Activated naive CD4-positive, alpha-beta T cell treated with anti-CD3 and anti-CD28 coated beads for 36 hours (primary cell): ENCODE measurements at regions of chr20 and their contacts with region 1.

Region 1: GRCh38 chr20:35664544-35665221 is at the starts of genes CPNE1 and RBM12:
- DNase-seq: peak; percentile 95
- H3K4me3 Mint-ChIP-seq: peak within 1 kb of the TSS; percentile 95
- H3K27ac Mint-ChIP-seq: peak within 1 kb of the TSS; percentile 99
- H3K4me1 Mint-ChIP-seq: peaks cover 36% of the 10 kb centered on the region
- H3K27me3 Mint-ChIP-seq: no peaks in the 10 kb centered on the region
- total RNA-seq, gene CPNE1: 261 to 281 TPM
- total RNA-seq, gene RBM12: 106 to 110 TPM

Region 2: DNA sequence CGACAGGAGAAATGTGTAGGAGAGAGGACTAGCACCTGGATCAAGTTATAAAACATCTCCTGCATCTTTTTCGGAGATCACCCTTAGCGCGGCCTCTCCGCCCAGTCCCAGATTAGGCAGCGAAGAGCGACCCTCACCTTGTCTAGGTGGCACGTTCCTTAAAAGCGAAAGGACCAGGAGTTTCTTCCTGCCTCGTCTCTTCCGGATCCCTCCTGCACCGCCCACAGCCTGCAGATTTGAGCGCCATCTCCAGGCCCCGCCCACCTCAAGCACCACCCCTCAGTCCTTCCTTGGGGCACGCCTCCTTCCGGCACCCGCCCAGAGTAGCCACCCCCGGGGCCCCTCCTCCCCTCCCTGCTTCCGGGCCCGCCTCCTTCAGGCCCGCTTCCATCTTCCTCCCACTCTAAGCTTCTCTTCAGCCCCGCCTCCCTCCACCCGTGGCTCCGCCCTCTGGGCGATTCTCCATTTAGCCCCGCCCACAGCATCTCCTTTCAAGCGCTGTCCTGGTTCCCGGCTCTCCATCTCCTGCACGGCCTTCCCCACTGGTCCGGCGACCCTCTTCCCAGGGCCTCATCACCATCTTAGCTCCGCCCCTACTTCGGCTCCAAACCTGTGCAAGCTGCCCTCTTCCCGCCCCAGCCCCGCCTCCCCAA is 1671.6 kb before region 1 on chr20:
- CTCF ChIA-PET with region 1: no interaction called
- intact Hi-C with region 1: loop called (anchors 5 kb)
- DNase-seq: peak; percentile 100
- H3K4me3 Mint-ChIP-seq: peak overlapping the region; percentile 90
- H3K27ac Mint-ChIP-seq: peak overlapping the region; percentile 98
- H3K4me1 Mint-ChIP-seq: peaks cover 46% of the 10 kb centered on the region
- H3K27me3 Mint-ChIP-seq: no peaks in the 10 kb centered on the region

Region 3: DNA sequence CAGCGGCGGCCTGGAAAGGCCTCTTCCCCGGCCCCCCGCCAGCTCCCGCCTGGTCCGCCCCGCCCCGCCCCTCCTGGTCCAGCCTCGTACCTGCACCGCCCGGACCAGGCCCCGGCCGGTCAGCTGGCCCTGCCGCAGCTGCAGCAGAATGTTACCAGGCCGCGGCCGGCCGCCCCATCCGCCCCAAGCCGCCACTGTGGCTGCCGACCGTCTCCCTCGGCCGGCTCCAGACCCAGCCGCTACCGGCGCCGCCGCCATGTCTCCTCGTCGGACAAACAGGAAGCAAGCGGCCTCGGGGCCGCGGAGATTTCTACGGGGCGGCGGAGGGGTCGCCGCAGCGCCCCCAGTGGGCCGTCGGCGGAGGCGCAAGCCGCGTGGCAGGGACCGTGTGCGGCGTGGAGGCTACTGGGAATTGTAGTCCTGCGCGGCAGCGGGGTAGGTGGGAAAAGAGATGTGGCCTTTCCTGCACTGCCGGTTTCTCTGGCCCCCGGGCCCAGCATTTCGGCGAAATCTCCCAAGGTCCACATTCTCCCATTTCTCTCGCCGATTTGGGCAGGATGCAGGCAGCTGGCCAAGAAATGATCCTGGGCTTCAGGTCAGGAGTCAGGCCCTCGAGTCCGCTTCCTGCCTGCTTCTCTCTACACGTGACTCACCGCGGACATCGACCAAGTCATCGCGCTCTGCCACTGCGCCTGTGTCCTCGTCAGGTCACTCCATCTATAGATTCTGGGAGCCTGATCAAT is 572.0 kb before region 1 on chr20 and contains the start of gene TRPC4AP:
- CTCF ChIA-PET with region 1: no interaction called
- intact Hi-C with region 1: loop called (anchors 2 kb)
- DNase-seq: peak; percentile 90
- H3K4me3 Mint-ChIP-seq: peak within 1 kb of the TSS; percentile 89
- H3K27ac Mint-ChIP-seq: peak within 1 kb of the TSS; percentile 100
- H3K4me1 Mint-ChIP-seq: peaks cover 59% of the 10 kb centered on the region
- H3K27me3 Mint-ChIP-seq: no peaks in the 10 kb centered on the region
- total RNA-seq, gene TRPC4AP: 49.6 to 51.7 TPM

Region 4: GRCh38 chr20:35454881-35455609 is 209.6 kb before region 1 on chr20 and contains the start of gene CEP250:
- CTCF ChIA-PET with region 1: no interaction called
- intact Hi-C with region 1: loop called (anchors 2 kb)
- DNase-seq: peak; percentile 94
- H3K4me3 Mint-ChIP-seq: peak within 1 kb of the TSS; percentile 89
- H3K27ac Mint-ChIP-seq: peak within 1 kb of the TSS; percentile 99
- H3K4me1 Mint-ChIP-seq: peaks cover 27% of the 10 kb centered on the region
- H3K27me3 Mint-ChIP-seq: no peaks in the 10 kb centered on the region
- total RNA-seq, gene CEP250: 43.4 to 46.9 TPM

Region 5: GRCh38 chr20:35619196-35620095 is 45.2 kb before region 1 on chr20:
- CTCF ChIA-PET with region 1: interaction called, 14 read pairs
- intact Hi-C with region 1: loop called (anchors 1 kb)
- DNase-seq: peak; percentile 88
- H3K4me3 Mint-ChIP-seq: peak overlapping the region; percentile 82
- H3K27ac Mint-ChIP-seq: peak overlapping the region; percentile 70
- H3K4me1 Mint-ChIP-seq: peaks cover 47% of the 10 kb centered on the region
- H3K27me3 Mint-ChIP-seq: peaks cover 4% of the 10 kb centered on the region

Region 6: GRCh38 chr20:35648836-35649235 is 15.8 kb before region 1 on chr20:
- CTCF ChIA-PET with region 1: no interaction called
- intact Hi-C with region 1: no loop called
- DNase-seq: no peak
- H3K4me3 Mint-ChIP-seq: no peak overlapping the region
- H3K27ac Mint-ChIP-seq: peak overlapping the region; percentile 5
- H3K4me1 Mint-ChIP-seq: peaks cover 75% of the 10 kb centered on the region
- H3K27me3 Mint-ChIP-seq: no peaks in the 10 kb centered on the region

Region 7: GRCh38 chr20:35771689-35772562 is 107.2 kb after region 1 on chr20 and contains the start of gene PHF20:
- CTCF ChIA-PET with region 1: no interaction called
- intact Hi-C with region 1: loop called (anchors 2 kb)
- DNase-seq: peak; percentile 100
- H3K4me3 Mint-ChIP-seq: peak within 1 kb of the TSS; percentile 80
- H3K27ac Mint-ChIP-seq: peak within 1 kb of the TSS; percentile 82
- H3K4me1 Mint-ChIP-seq: peaks cover 74% of the 10 kb centered on the region
- H3K27me3 Mint-ChIP-seq: no peaks in the 10 kb centered on the region
- total RNA-seq, gene PHF20: 39.8 to 46.0 TPM

Region 8: DNA sequence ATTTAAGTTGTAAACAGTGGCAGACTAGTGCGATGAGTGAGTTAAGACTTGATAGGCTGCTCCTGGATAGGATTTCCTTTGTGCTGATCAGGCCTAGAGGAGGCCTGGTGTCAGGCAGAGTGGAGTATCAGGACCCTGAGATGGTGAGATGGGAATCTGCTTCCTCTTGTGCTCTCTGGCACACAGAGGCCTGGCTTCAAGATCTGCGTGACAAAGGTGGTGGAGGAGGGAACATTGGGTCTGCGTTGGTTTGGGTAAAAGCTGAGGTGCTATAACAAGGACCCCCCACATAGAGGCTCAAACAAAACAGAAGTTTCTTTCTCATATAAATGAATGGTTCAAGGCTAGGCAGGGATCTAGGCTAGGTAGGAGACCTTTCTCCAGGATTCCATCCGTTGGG is 269.4 kb after region 1 on chr20:
- CTCF ChIA-PET with region 1: no interaction called
- intact Hi-C with region 1: no loop called
- DNase-seq: no peak
- H3K4me3 Mint-ChIP-seq: no peak overlapping the region
- H3K27ac Mint-ChIP-seq: no peak overlapping the region
- H3K4me1 Mint-ChIP-seq: peaks cover 7% of the 10 kb centered on the region
- H3K27me3 Mint-ChIP-seq: no peaks in the 10 kb centered on the region

Region 9: GRCh38 chr20:35978041-35978513 is 313.4 kb after region 1 on chr20:
- CTCF ChIA-PET with region 1: no interaction called
- intact Hi-C with region 1: no loop called
- DNase-seq: no peak
- H3K4me3 Mint-ChIP-seq: no peak overlapping the region
- H3K27ac Mint-ChIP-seq: no peak overlapping the region
- H3K4me1 Mint-ChIP-seq: no peaks in the 10 kb centered on the region
- H3K27me3 Mint-ChIP-seq: no peaks in the 10 kb centered on the region

Region 10: DNA sequence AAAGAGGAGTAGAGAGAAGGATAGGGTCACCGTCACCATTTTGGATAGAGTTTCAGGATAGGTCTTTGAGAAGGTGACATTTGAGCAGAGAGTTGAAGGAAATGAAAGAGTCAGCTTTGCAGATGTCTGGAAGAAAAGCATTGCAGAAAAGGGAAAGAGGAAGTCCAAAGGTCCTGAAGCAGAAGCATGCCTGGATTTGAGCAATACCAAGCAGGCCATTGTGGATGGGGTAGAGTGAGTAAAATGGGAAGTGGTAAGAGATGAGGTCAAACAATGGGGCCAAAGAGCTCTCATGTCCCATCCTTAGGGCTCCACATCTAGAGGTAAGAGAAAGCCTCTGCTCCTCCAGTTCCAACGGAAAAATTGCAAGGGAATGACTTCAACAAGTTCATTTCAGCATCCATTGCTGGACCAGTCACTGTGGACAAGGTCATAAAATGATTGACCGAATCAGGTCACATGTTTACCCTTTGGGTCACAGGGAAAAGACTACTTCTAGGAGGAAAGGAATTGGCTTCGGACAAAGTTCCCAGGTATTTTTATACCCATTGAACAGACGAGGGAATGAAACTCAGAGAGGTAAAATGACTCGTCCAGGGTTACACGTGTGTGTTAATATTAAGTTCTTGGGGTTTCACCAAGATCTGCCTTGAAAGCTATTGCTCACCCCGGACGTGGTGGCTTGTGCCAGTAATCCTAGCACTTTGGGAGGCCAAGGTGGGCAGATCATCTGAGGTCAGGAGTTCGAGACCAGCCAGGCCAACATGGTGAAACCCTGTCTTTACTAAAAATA is 1293.4 kb after region 1 on chr20:
- CTCF ChIA-PET with region 1: no interaction called
- intact Hi-C with region 1: no loop called
- DNase-seq: peak; percentile 36
- H3K4me3 Mint-ChIP-seq: no peak overlapping the region
- H3K27ac Mint-ChIP-seq: no peak overlapping the region
- H3K4me1 Mint-ChIP-seq: peaks cover 28% of the 10 kb centered on the region
- H3K27me3 Mint-ChIP-seq: no peaks in the 10 kb centered on the region